CD14-positive monocyte (primary cell): ENCODE measurements at regions of chr4 and their contacts with region 1.

Region 1: GRCh38 chr4:40629401-40630334 is at the start of gene RBM47:
- DNase-seq: peak; percentile 62 to 75 (median 66)
- H3K4me3 ChIP-seq: peak within 1 kb of the TSS; percentile 91 to 99 (median 97)
- H3K4me3 Mint-ChIP-seq: peak within 1 kb of the TSS; percentile 98 to 100
- H3K27ac ChIP-seq: peak within 1 kb of the TSS; percentile 97 to 100
- H3K27ac Mint-ChIP-seq: peak within 1 kb of the TSS; percentile 99 to 100 (median 99)
- H3K4me1 ChIP-seq: peaks cover 51 to 70% of the 10 kb centered on the region in 2 donors
- H3K4me1 Mint-ChIP-seq: peaks cover 59% of the 10 kb centered on the region
- H3K27me3 ChIP-seq: no peaks in the 10 kb centered on the region
- H3K27me3 Mint-ChIP-seq: peaks cover 0 to 3% (median 0%) of the 10 kb centered on the region in 3 donors
- CTCF ChIP-seq: peak; percentile 32
- polyA plus RNA-seq, gene RBM47: 79.5 to 101 (median 92.8) TPM

Region 2: GRCh38 chr4:40492691-40493090 is 137.0 kb before region 1 on chr4:
- intact Hi-C with region 1: loop called in 1 of 2 experiments (anchors 10 kb)
- DNase-seq: peak in 2 of 3 donors; percentile 14 to 19
- H3K4me3 ChIP-seq: no peak overlapping the region
- H3K4me3 Mint-ChIP-seq: no peak overlapping the region
- H3K27ac ChIP-seq: peak overlapping the region; percentile 25 to 79
- H3K27ac Mint-ChIP-seq: peak overlapping the region; percentile 79 to 93 (median 91)
- H3K4me1 ChIP-seq: peaks cover 35 to 57% of the 10 kb centered on the region in 2 donors
- H3K4me1 Mint-ChIP-seq: peaks cover 60% of the 10 kb centered on the region
- H3K27me3 ChIP-seq: no peaks in the 10 kb centered on the region
- H3K27me3 Mint-ChIP-seq: no peaks in the 10 kb centered on the region
- CTCF ChIP-seq: no peak

Region 3: DNA sequence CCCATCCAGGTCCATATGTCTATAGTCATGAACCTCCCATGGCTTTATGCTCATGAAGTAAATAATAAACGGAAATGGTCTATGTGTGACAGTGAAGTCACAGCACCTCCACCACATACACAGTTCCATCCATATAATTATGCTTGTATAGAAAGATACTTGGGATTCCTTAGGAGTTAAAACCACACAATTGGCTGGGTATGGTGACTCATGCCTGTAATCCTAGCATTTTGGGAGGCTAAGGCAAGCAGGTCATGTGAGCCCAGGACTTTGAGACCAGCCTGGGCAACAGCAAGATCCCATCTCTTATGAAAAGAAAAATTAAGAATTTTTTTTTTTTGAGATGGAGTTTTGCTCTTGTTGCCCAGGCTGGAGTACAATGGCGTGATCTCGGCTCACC is 55.6 kb after region 1 on chr4:
- intact Hi-C with region 1: no loop called
- DNase-seq: no peak
- H3K4me3 ChIP-seq: no peak overlapping the region
- H3K4me3 Mint-ChIP-seq: no peak overlapping the region
- H3K27ac ChIP-seq: no peak overlapping the region
- H3K27ac Mint-ChIP-seq: no peak overlapping the region
- H3K4me1 ChIP-seq: peaks cover 35 to 48% of the 10 kb centered on the region in 2 donors
- H3K4me1 Mint-ChIP-seq: peaks cover 47% of the 10 kb centered on the region
- H3K27me3 ChIP-seq: no peaks in the 10 kb centered on the region
- H3K27me3 Mint-ChIP-seq: peaks cover 0 to 3% (median 0%) of the 10 kb centered on the region in 3 donors
- CTCF ChIP-seq: no peak